Caco-2 (cell line): ENCODE measurements at regions of chr15 and their contacts with region 1.

Region 1: GRCh38 chr15:79853458-79854328 is 43.1 kb downstream of the MTHFS start:
- DNase-seq: peak; percentile 61 to 76
- H3K4me3 ChIP-seq: no peak overlapping the region
- H3K4me3 Mint-ChIP-seq: no peak overlapping the region
- H3K27ac Mint-ChIP-seq: peak overlapping the region; percentile 18
- H3K4me1 ChIP-seq: 0 out of 2 replicates have a peak, but pooled peaks cover 3% of the 10 kb centered on the region
- H3K4me1 Mint-ChIP-seq: peaks cover 21% of the 10 kb centered on the region
- H3K27me3 ChIP-seq: no peaks in the 10 kb centered on the region
- H3K27me3 Mint-ChIP-seq: no peaks in the 10 kb centered on the region
- CTCF ChIP-seq: peak; percentile 84 to 95

Region 2: GRCh38 chr15:79339564-79340314 is 514.0 kb before region 1 on chr15:
- CTCF ChIA-PET with region 1: interaction called, 12 read pairs
- POLR2A ChIA-PET with region 1: no interaction called
- intact Hi-C with region 1: loop called (anchors 5 kb)
- DNase-seq: peak in 1 of 2 experiments; percentile 41
- H3K4me3 ChIP-seq: no peak overlapping the region
- H3K4me3 Mint-ChIP-seq: no peak overlapping the region
- H3K27ac Mint-ChIP-seq: no peak overlapping the region
- H3K4me1 ChIP-seq: no peaks in the 10 kb centered on the region
- H3K4me1 Mint-ChIP-seq: no peaks in the 10 kb centered on the region
- H3K27me3 ChIP-seq: no peaks in the 10 kb centered on the region
- H3K27me3 Mint-ChIP-seq: no peaks in the 10 kb centered on the region
- CTCF ChIP-seq: peak; percentile 66 to 78

Region 3: DNA sequence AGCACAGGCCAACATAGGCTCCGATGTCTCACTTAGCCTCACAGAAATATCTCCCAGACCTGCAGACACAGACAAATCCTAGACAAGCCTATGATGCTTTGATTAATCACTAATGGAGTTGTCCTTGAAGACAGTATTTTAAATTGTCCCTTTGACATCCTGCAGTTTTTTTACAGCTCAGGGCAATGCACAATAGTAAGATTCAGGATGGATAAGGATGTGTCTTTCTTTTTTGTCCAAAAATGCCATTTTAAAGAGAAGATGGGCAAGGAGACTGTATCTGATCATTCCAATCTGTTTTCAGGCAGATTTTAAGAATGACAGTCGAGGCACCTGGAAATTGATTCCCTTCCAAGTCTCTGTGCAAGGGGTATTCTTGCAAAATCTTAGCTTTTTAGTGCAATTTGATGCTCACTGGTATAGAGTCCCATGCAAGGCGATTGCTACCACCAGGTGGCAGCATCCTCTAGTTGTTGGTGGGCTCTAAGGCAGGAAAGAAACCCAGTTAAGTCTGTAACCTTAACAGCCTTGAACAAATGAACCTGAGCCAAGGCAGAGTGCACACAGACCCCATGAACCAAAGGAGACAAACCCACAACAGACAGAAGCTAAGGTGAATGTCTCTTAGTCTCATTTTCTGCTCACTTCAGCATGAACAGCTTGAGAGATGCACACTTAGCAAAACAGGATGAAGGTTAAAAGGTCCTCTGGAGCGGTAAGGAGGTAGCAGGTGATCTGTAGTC is 472.8 kb before region 1 on chr15:
- CTCF ChIA-PET with region 1: interaction called, 15 read pairs
- POLR2A ChIA-PET with region 1: no interaction called
- intact Hi-C with region 1: loop called (anchors 1 kb)
- DNase-seq: peak; percentile 68 to 78
- H3K4me3 ChIP-seq: no peak overlapping the region
- H3K4me3 Mint-ChIP-seq: no peak overlapping the region
- H3K27ac Mint-ChIP-seq: no peak overlapping the region
- H3K4me1 ChIP-seq: no peaks in the 10 kb centered on the region
- H3K4me1 Mint-ChIP-seq: no peaks in the 10 kb centered on the region
- H3K27me3 ChIP-seq: no peaks in the 10 kb centered on the region
- H3K27me3 Mint-ChIP-seq: no peaks in the 10 kb centered on the region
- CTCF ChIP-seq: peak; percentile 65 to 76

Region 4: GRCh38 chr15:79798311-79798710 is 55.4 kb before region 1 on chr15:
- CTCF ChIA-PET with region 1: no interaction called
- POLR2A ChIA-PET with region 1: no interaction called
- intact Hi-C with region 1: no loop called
- DNase-seq: no peak
- H3K4me3 ChIP-seq: no peak overlapping the region
- H3K4me3 Mint-ChIP-seq: no peak overlapping the region
- H3K27ac Mint-ChIP-seq: no peak overlapping the region
- H3K4me1 ChIP-seq: no peaks in the 10 kb centered on the region
- H3K4me1 Mint-ChIP-seq: no peaks in the 10 kb centered on the region
- H3K27me3 ChIP-seq: no peaks in the 10 kb centered on the region
- H3K27me3 Mint-ChIP-seq: peaks cover 7% of the 10 kb centered on the region
- CTCF ChIP-seq: no peak

Region 5: GRCh38 chr15:79863886-79864285 is 10.2 kb after region 1 on chr15:
- CTCF ChIA-PET with region 1: interaction called, 5 read pairs
- POLR2A ChIA-PET with region 1: interaction called, 10 read pairs
- intact Hi-C with region 1: no loop called
- DNase-seq: no peak
- H3K4me3 ChIP-seq: no peak overlapping the region
- H3K4me3 Mint-ChIP-seq: no peak overlapping the region
- H3K27ac Mint-ChIP-seq: no peak overlapping the region
- H3K4me1 ChIP-seq: peaks cover 22% of the 10 kb centered on the region
- H3K4me1 Mint-ChIP-seq: peaks cover 19% of the 10 kb centered on the region
- H3K27me3 ChIP-seq: no peaks in the 10 kb centered on the region
- H3K27me3 Mint-ChIP-seq: no peaks in the 10 kb centered on the region
- CTCF ChIP-seq: no peak